Activated B cell treated with CpG ODN at 0.5 μM for 24 hours (primary cell): ENCODE measurements at regions of chr9 and their contacts with region 1.

Region 1: DNA sequence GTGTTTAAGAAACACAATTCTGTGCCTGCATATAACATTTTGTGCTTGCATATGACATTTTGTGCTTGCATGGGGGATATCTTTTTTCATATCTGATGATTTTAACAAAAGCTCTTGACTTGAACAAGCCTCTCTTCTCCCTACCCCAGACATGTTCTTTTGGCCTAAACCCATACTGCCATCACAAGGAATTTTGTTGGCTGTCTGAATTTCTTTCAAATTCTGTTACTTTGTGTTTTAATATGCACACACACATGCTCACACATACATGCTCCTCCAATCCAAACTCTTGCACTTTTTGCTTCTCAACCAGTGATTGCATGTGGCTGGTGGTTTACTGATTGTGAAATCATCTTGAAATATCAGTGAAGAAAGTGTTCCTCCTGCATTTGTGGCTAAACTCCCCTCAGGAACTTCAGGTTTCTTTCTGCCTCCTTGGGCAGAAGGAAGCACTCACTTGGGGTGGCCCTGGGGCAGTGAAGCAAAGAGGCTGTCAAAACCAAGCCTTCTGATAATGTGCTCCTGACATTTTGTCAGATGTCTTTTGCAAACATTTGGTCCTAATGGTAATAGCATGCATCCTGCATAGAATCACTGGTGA is 377.2 kb upstream of the KLF4 start:
- DNase-seq: no peak
- ATAC-seq: no peak
- H3K4me3 Mint-ChIP-seq: peak overlapping the region; percentile 36
- H3K27ac Mint-ChIP-seq: peak overlapping the region; percentile 51
- H3K4me1 Mint-ChIP-seq: peaks cover 55% of the 10 kb centered on the region
- H3K27me3 Mint-ChIP-seq: no peaks in the 10 kb centered on the region
- CTCF ChIP-seq: no peak

Region 2: GRCh38 chr9:107842530-107842929 is 24.3 kb before region 1 on chr9:
- CTCF ChIA-PET with region 1: no interaction called
- POLR2A ChIA-PET with region 1: no interaction called
- intact Hi-C with region 1: loop called (anchors 1 kb)
- DNase-seq: no peak
- ATAC-seq: no peak
- H3K4me3 Mint-ChIP-seq: no peak overlapping the region
- H3K27ac Mint-ChIP-seq: no peak overlapping the region
- H3K4me1 Mint-ChIP-seq: no peaks in the 10 kb centered on the region
- H3K27me3 Mint-ChIP-seq: no peaks in the 10 kb centered on the region
- CTCF ChIP-seq: no peak

Region 3: GRCh38 chr9:107983181-107983603 is 116.4 kb after region 1 on chr9:
- CTCF ChIA-PET with region 1: no interaction called
- POLR2A ChIA-PET with region 1: no interaction called
- intact Hi-C with region 1: no loop called
- DNase-seq: no peak
- ATAC-seq: no peak
- H3K4me3 Mint-ChIP-seq: no peak overlapping the region
- H3K27ac Mint-ChIP-seq: no peak overlapping the region
- H3K4me1 Mint-ChIP-seq: no peaks in the 10 kb centered on the region
- H3K27me3 Mint-ChIP-seq: peaks cover 4% of the 10 kb centered on the region
- CTCF ChIP-seq: no peak